ENCODE measurements at regions of chr3 and their contacts with region 1.

Region 1: GRCh38 chr3:112111785-112112402 is 21.2 kb downstream of the GCSAM start:
- DNase-seq: peak; percentile 16 to 70 (median 48)
- H3K4me3 ChIP-seq: no peak overlapping the region
- H3K4me3 Mint-ChIP-seq: no peak overlapping the region
- H3K27ac ChIP-seq: no peak overlapping the region
- H3K27ac Mint-ChIP-seq: no peak overlapping the region
- H3K4me1 ChIP-seq: no peaks in the 10 kb centered on the region
- H3K4me1 Mint-ChIP-seq: peaks cover 0 to 6% (median 5%) of the 10 kb centered on the region in 3 donors
- H3K27me3 ChIP-seq: no peaks in the 10 kb centered on the region
- H3K27me3 Mint-ChIP-seq: peaks cover 0 to 5% of the 10 kb centered on the region in 2 donors

Region 2: DNA sequence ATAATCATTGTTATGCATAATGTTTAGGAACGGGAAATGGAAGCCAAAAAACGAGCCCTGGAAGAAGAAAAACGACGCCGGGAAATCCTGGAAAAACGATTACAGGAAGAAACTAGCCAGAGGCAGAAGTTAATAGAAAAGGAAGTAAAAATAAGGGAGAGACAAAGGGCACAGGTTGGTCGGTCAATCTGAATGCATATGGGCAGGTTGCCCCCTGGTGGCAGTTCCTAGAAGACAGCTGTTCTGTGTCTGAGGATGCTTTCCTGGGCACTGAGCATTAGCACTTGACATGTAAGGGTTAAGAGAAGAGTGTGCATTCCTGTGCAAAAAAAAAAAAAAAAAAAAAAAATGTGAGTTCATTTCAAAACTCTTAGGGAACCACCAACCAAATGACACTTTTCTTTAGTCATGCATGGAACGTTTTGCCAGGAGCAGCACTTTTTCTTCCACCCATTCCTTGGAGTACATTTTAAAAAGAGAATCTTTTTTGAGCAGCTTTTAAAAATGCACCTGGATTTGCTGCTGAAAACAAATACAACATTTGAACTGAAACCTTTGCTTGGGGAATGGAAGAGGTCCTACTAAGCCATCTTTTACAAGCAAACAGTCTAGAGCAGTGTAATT is 144.1 kb before region 1 on chr3:
- CTCF ChIA-PET with region 1: no interaction called
- POLR2A ChIA-PET with region 1: no interaction called
- DNase-seq: peak; percentile 61 to 84 (median 67)
- H3K4me3 ChIP-seq: no peak overlapping the region
- H3K4me3 Mint-ChIP-seq: no peak overlapping the region
- H3K27ac ChIP-seq: no peak overlapping the region
- H3K27ac Mint-ChIP-seq: peak overlapping the region in 3 of 8 donors; percentile 7 to 8 (median 7)
- H3K4me1 ChIP-seq: peaks cover 3% of the 10 kb centered on the region
- H3K4me1 Mint-ChIP-seq: peaks cover 3 to 9% (median 4%) of the 10 kb centered on the region in 3 donors
- H3K27me3 ChIP-seq: no peaks in the 10 kb centered on the region
- H3K27me3 Mint-ChIP-seq: no peaks in the 10 kb centered on the region

Region 3: GRCh38 chr3:112032098-112032731 is 79.7 kb before region 1 on chr3:
- CTCF ChIA-PET with region 1: no interaction called
- POLR2A ChIA-PET with region 1: no interaction called
- DNase-seq: no peak
- H3K4me3 ChIP-seq: no peak overlapping the region
- H3K4me3 Mint-ChIP-seq: no peak overlapping the region
- H3K27ac ChIP-seq: no peak overlapping the region
- H3K27ac Mint-ChIP-seq: no peak overlapping the region
- H3K4me1 ChIP-seq: no peaks in the 10 kb centered on the region
- H3K4me1 Mint-ChIP-seq: no peaks in the 10 kb centered on the region
- H3K27me3 ChIP-seq: no peaks in the 10 kb centered on the region
- H3K27me3 Mint-ChIP-seq: peaks cover 1 to 3% of the 10 kb centered on the region in 2 donors

Region 4: GRCh38 chr3:112124907-112125607 is 13.2 kb after region 1 on chr3:
- CTCF ChIA-PET with region 1: interaction called, 10 read pairs
- POLR2A ChIA-PET with region 1: no interaction called
- DNase-seq: no peak
- H3K4me3 ChIP-seq: no peak overlapping the region
- H3K4me3 Mint-ChIP-seq: no peak overlapping the region
- H3K27ac ChIP-seq: no peak overlapping the region
- H3K27ac Mint-ChIP-seq: peak overlapping the region in 5 of 8 donors; percentile 1 to 40 (median 15)
- H3K4me1 ChIP-seq: peaks cover 72% of the 10 kb centered on the region
- H3K4me1 Mint-ChIP-seq: peaks cover 47 to 73% (median 71%) of the 10 kb centered on the region in 3 donors
- H3K27me3 ChIP-seq: no peaks in the 10 kb centered on the region
- H3K27me3 Mint-ChIP-seq: peaks cover 0 to 1% of the 10 kb centered on the region in 2 donors

Region 5: DNA sequence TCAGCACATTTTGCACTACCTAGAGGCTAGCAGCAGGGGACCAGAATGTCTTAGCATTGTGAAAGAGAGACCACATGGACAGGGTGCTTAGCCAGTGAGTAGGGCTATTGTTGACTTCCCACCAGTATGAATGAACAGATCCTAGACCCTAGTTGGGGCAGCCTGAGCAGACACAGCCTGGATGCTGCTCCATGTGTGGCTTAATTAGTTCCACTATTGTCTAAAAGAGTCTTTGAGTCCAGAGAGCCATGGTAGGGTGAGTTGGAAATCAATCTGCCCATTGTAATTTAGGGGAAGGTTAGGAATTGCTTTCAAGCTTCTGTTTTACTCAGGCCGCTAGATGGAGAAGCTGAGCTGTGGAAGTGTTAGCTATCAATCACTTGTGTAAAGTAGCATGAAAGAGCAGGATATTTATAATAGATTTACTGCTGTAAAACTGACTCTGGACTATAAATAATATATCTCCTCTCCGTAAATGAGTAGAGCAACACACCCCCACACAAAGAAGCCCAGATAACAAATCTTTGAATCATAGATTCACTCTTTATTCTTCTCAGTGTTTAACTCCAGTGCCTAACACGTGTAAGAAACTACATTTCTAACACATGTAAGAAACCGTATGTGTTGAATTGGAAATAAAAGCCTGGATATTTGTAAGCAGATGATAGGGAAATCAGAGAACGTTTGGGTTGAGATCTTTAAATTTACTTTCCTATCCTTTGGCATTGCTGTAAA is 25.2 kb after region 1 on chr3:
- CTCF ChIA-PET with region 1: interaction called, 16 read pairs
- POLR2A ChIA-PET with region 1: no interaction called
- DNase-seq: peak in 2 of 5 donors; percentile 40 to 57
- H3K4me3 ChIP-seq: no peak overlapping the region
- H3K4me3 Mint-ChIP-seq: no peak overlapping the region
- H3K27ac ChIP-seq: no peak overlapping the region
- H3K27ac Mint-ChIP-seq: peak overlapping the region in 3 of 8 donors; percentile 2 to 35 (median 35)
- H3K4me1 ChIP-seq: peaks cover 38% of the 10 kb centered on the region
- H3K4me1 Mint-ChIP-seq: peaks cover 34 to 61% (median 56%) of the 10 kb centered on the region in 3 donors
- H3K27me3 ChIP-seq: no peaks in the 10 kb centered on the region
- H3K27me3 Mint-ChIP-seq: no peaks in the 10 kb centered on the region

Region 6: DNA sequence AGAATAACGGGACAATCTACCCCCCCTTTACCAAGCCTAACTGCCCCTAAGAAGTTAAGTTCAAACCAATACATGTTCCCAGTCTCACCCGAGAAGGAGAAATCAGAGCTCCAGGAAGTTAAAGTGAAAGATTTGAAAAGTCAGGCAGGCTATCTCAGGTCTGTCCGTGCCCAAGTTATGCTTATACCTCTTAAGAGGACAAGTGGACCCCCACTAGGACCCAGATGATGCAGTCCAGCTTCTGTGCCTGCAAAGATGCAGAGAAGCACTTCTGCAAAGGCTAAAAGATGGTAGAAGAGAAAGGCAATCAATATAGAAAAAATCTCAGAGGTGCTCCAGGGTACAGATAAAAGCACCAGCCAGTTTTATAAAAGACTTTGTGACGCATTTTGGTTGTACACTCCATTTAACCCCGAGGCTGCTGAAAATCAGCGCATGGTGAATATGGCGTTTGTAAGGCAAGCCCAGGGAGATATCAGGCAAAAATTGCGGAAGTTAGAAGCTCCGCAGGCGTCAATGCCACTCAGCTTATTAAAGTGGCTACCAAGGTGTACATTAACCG is 192.0 kb after region 1 on chr3:
- CTCF ChIA-PET with region 1: interaction called, 10 read pairs
- POLR2A ChIA-PET with region 1: no interaction called
- DNase-seq: peak in 2 of 5 donors; percentile 6 to 49
- H3K4me3 ChIP-seq: peak overlapping the region; percentile 62
- H3K4me3 Mint-ChIP-seq: no peak overlapping the region
- H3K27ac ChIP-seq: no peak overlapping the region
- H3K27ac Mint-ChIP-seq: no peak overlapping the region
- H3K4me1 ChIP-seq: peaks cover 18% of the 10 kb centered on the region
- H3K4me1 Mint-ChIP-seq: peaks cover 1% of the 10 kb centered on the region in 3 donors
- H3K27me3 ChIP-seq: no peaks in the 10 kb centered on the region
- H3K27me3 Mint-ChIP-seq: no peaks in the 10 kb centered on the region

Region 7: DNA sequence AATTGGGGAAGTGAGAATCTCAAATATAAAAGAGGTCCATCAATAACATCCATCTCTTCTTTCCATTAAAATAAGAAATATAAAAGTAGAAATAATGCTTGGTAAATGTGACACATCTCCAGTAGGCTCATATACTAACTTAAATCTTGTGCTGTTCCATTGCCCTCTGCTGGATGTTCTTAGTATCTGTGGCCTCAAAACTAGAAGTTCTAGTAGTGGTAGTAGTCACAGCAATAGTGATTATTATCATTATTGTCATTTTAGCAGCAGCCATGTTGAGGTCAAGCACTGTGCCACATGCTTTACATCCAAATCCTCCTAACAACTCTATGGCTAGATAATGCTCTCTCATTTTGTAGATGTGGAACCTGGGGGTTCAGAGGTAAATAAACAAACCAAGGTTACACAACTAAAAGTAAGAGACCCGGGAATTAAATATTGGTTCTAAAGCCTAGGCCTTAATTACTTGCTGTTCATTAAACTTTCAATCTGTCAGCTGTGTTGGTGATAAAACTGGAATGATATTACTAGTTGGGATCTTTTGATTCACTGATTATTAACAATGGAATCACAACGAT is 407.6 kb after region 1 on chr3:
- CTCF ChIA-PET with region 1: interaction called, 11 read pairs
- POLR2A ChIA-PET with region 1: no interaction called
- DNase-seq: peak in 2 of 5 donors; percentile 50 to 55
- H3K4me3 ChIP-seq: no peak overlapping the region
- H3K4me3 Mint-ChIP-seq: no peak overlapping the region
- H3K27ac ChIP-seq: no peak overlapping the region
- H3K27ac Mint-ChIP-seq: no peak overlapping the region
- H3K4me1 ChIP-seq: peaks cover 3% of the 10 kb centered on the region
- H3K4me1 Mint-ChIP-seq: peaks cover 15 to 25% (median 22%) of the 10 kb centered on the region in 3 donors
- H3K27me3 ChIP-seq: no peaks in the 10 kb centered on the region
- H3K27me3 Mint-ChIP-seq: peaks cover 0 to 2% of the 10 kb centered on the region in 2 donors

Region 8: DNA sequence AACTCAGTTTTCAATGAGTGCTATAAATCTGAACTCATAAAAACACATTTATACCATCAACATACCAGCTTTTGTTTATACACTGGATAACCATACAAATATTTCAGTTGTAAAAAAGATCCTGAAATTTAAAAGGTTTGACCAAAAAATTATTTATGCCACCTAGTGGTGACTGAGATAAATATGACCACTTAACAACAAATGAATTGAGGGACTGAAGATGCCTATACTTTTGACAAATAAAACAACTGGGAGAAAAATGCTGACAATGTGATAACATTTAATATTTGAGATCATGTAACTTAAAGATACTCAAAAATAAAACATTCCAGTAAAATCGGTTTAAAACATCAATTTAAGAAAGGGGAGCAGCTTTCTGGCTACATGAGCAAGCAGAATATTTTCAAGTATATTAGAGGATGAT is 419.5 kb after region 1 on chr3:
- CTCF ChIA-PET with region 1: interaction called, 10 read pairs
- POLR2A ChIA-PET with region 1: no interaction called
- DNase-seq: peak in 1 of 5 donors; percentile 23
- H3K4me3 ChIP-seq: no peak overlapping the region
- H3K4me3 Mint-ChIP-seq: no peak overlapping the region
- H3K27ac ChIP-seq: no peak overlapping the region
- H3K27ac Mint-ChIP-seq: peak overlapping the region in 1 of 8 donors; percentile 9
- H3K4me1 ChIP-seq: no peaks in the 10 kb centered on the region
- H3K4me1 Mint-ChIP-seq: peaks cover 0 to 4% (median 2%) of the 10 kb centered on the region in 3 donors
- H3K27me3 ChIP-seq: no peaks in the 10 kb centered on the region
- H3K27me3 Mint-ChIP-seq: no peaks in the 10 kb centered on the region